PC-9 (cell line): ENCODE measurements at regions of chr16 and their contacts with region 1.

Region 1: GRCh38 chr16:57185944-57186871 is at the starts of genes PSME3IP1 and RSPRY1:
- DNase-seq: peak; percentile 97 to 99
- H3K4me3 ChIP-seq: peak within 1 kb of the TSS; percentile 86
- H3K27ac ChIP-seq: peak within 1 kb of the TSS; percentile 64
- H3K4me1 ChIP-seq: peaks cover 44% of the 10 kb centered on the region
- H3K27me3 ChIP-seq: no peaks in the 10 kb centered on the region
- CTCF ChIP-seq: no peak
- total RNA-seq, gene PSME3IP1: 92.4 and 121 TPM in 2 replicates
- total RNA-seq, gene RSPRY1: 26.2 and 26.3 TPM in 2 replicates

Region 2: GRCh38 chr16:56262148-56262547 is 924.1 kb before region 1 on chr16:
- CTCF ChIA-PET with region 1: interaction called, 14 read pairs
- POLR2A ChIA-PET with region 1: no interaction called
- intact Hi-C with region 1: no loop called
- DNase-seq: peak; percentile 76 to 81
- H3K4me3 ChIP-seq: no peak overlapping the region
- H3K27ac ChIP-seq: no peak overlapping the region
- H3K4me1 ChIP-seq: peaks cover 26% of the 10 kb centered on the region
- H3K27me3 ChIP-seq: no peaks in the 10 kb centered on the region
- CTCF ChIP-seq: no peak

Region 3: GRCh38 chr16:56729735-56730662 is 456.2 kb before region 1 on chr16 and contains the start of gene NUP93:
- CTCF ChIA-PET with region 1: no interaction called
- POLR2A ChIA-PET with region 1: no interaction called
- intact Hi-C with region 1: no loop called
- DNase-seq: peak; percentile 85 to 88
- H3K4me3 ChIP-seq: peak within 1 kb of the TSS; percentile 93
- H3K27ac ChIP-seq: peak within 1 kb of the TSS; percentile 62
- H3K4me1 ChIP-seq: peaks cover 17% of the 10 kb centered on the region
- H3K27me3 ChIP-seq: no peaks in the 10 kb centered on the region
- CTCF ChIP-seq: no peak
- total RNA-seq, gene NUP93: 74.7 and 92.4 TPM in 2 replicates

Region 4: GRCh38 chr16:57244767-57245471 is 58.7 kb after region 1 on chr16 and contains the start of gene ARL2BP:
- CTCF ChIA-PET with region 1: interaction called, 4 read pairs
- POLR2A ChIA-PET with region 1: interaction called, 7 read pairs
- intact Hi-C with region 1: loop called (anchors 1 kb)
- DNase-seq: peak; percentile 89 to 98
- H3K4me3 ChIP-seq: peak within 1 kb of the TSS; percentile 78
- H3K27ac ChIP-seq: peak within 1 kb of the TSS; percentile 63
- H3K4me1 ChIP-seq: peaks cover 17% of the 10 kb centered on the region
- H3K27me3 ChIP-seq: no peaks in the 10 kb centered on the region
- CTCF ChIP-seq: no peak
- total RNA-seq, gene ARL2BP: 19.8 and 23.6 TPM in 2 replicates

Region 5: DNA sequence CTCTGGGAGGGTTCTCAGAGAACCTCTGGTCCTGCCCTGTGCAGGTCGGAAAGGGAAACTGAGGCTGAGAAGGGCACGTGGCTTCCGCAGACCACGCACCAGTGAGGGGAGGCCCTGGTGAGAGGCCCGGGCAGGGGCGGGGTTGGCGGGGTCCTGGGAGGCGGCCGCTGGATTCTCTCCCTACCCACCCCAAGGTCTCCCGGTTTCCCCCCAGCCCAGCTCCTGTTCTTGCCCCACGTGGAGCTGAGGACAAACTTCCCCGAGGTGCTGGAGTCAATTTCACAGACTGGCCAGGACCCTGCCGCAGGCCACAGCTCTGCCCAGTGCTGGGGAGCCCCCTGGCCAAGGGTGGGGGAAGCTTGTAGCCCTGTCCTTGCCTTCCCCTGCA is 229.9 kb after region 1 on chr16:
- CTCF ChIA-PET with region 1: no interaction called
- POLR2A ChIA-PET with region 1: no interaction called
- intact Hi-C with region 1: loop called (anchors 5 kb)
- DNase-seq: no peak
- H3K4me3 ChIP-seq: no peak overlapping the region
- H3K27ac ChIP-seq: no peak overlapping the region
- H3K4me1 ChIP-seq: peaks cover 24% of the 10 kb centered on the region
- H3K27me3 ChIP-seq: no peaks in the 10 kb centered on the region; the same call in 1 of the 2 replicates
- CTCF ChIP-seq: no peak

Region 6: GRCh38 chr16:57479976-57480753 is 294.0 kb after region 1 on chr16:
- CTCF ChIA-PET with region 1: no interaction called
- POLR2A ChIA-PET with region 1: interaction called, 13 read pairs
- intact Hi-C with region 1: no loop called
- DNase-seq: peak in 1 of 2 experiments; percentile 77
- H3K4me3 ChIP-seq: no peak overlapping the region
- H3K27ac ChIP-seq: no peak overlapping the region
- H3K4me1 ChIP-seq: no peaks in the 10 kb centered on the region
- H3K27me3 ChIP-seq: no peaks in the 10 kb centered on the region
- CTCF ChIP-seq: no peak